ENCODE measurements at regions of chrX and their contacts with region 1.

Region 1: GRCh38 chrX:119791438-119792231 is at the start of gene RPL39:
- DNase-seq: peak; percentile 82
- H3K4me3 ChIP-seq: peak within 1 kb of the TSS; percentile 60
- H3K27ac ChIP-seq: peak within 1 kb of the TSS; percentile 87
- H3K4me1 ChIP-seq: peaks cover 4% of the 10 kb centered on the region
- H3K27me3 ChIP-seq: no peaks in the 10 kb centered on the region
- CTCF ChIP-seq: no peak
- total RNA-seq, gene RPL39: 1,267 to 1,593 TPM

Region 2: GRCh38 chrX:119693040-119693995 is 98.3 kb before region 1 on chrX and contains the start of gene SEPTIN6:
- intact Hi-C with region 1: no loop called
- DNase-seq: peak; percentile 71
- H3K4me3 ChIP-seq: peak within 1 kb of the TSS; percentile 74
- H3K27ac ChIP-seq: peak within 1 kb of the TSS; percentile 79
- H3K4me1 ChIP-seq: no peaks in the 10 kb centered on the region
- H3K27me3 ChIP-seq: no peaks in the 10 kb centered on the region
- CTCF ChIP-seq: no peak
- total RNA-seq, gene SEPTIN6: 9.4 to 21.2 TPM

Region 3: DNA sequence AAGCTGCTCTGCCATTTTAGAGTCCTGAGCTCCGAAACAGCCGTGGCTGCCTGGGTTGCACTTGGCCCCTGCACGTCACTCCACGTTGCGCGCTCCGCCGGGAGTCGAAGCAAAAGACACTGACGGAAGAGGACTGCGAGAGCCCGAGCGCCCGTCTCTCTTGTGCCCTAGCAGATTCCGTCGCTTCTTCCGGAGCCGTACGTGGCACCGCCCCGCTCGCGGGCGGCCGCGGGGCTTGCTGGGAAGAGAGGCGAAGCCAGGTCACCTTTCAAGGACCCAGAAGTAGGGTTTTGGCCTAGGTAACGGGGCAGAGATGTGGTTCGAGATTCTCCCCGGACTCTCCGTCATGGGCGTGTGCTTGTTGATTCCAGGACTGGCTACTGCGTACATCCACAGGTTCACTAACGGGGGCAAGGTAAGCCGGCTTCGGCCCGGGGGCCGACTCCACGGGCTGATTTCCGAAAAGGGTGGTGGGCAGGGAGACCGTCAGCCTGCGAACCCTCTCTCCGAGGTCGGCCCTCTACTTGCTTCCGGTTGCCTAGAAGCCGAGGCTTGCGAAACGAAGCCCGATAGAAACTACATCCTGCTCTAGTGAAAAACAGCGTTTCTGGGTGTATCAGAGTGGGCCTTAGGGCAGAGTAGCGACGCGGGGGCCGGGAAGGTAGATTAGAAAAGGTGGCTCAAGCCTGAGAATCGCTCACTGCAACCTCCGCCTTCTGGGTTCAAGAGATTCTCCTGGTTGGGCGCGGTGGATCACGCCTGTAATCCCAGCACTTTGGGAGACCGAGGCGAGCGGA is 80.2 kb after region 1 on chrX and contains the starts of genes NDUFA1 and RNF113A:
- intact Hi-C with region 1: loop called (anchors 5 kb)
- DNase-seq: peak; percentile 87
- H3K4me3 ChIP-seq: peak within 1 kb of the TSS; percentile 42
- H3K27ac ChIP-seq: peak within 1 kb of the TSS; percentile 79
- H3K4me1 ChIP-seq: no peaks in the 10 kb centered on the region
- H3K27me3 ChIP-seq: no peaks in the 10 kb centered on the region
- CTCF ChIP-seq: no peak
- total RNA-seq, gene NDUFA1: 167 to 221 TPM
- total RNA-seq, gene RNF113A: 13.4 to 14.6 TPM

Region 4: DNA sequence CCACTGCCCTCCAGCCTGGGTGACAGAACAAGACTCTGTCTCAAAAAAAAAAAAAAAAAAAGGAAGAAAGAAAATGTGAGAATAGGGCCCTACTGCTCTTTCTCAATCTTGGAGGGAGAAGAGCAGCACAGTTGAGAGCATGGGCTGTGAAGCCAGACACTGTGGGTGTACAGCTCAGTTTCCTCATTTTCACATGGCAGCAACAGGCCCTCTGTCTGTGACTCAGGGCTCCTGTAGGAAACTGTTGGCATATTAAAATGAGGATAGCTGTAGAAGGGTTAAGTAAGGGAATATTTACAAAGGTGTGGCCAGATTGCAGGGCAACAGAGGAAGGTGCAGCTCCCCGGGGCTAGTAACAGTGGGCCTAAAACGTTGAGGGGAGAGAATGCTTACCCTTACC is 107.5 kb after region 1 on chrX:
- intact Hi-C with region 1: no loop called
- DNase-seq: peak; percentile 22
- H3K4me3 ChIP-seq: no peak overlapping the region
- H3K27ac ChIP-seq: no peak overlapping the region
- H3K4me1 ChIP-seq: no peaks in the 10 kb centered on the region
- H3K27me3 ChIP-seq: no peaks in the 10 kb centered on the region
- CTCF ChIP-seq: no peak

Measured in colonic mucosa (tissue), 4 donors.